RWPE1 (cell line): ENCODE measurements at regions of chr1 and their contacts with region 1.

Region 1: GRCh38 chr1:110780600-110781484 is 92.1 kb upstream of the CD53 start:
- DNase-seq: peak; percentile 62
- H3K27ac ChIP-seq: no peak overlapping the region
- CTCF ChIP-seq: peak; percentile 72

Region 2: GRCh38 chr1:110619412-110620249 is 161.2 kb before region 1 on chr1:
- CTCF ChIA-PET with region 1: interaction called, 24 read pairs
- POLR2A ChIA-PET with region 1: no interaction called
- DNase-seq: peak; percentile 78
- H3K27ac ChIP-seq: no peak overlapping the region
- CTCF ChIP-seq: peak; percentile 81

Region 3: DNA sequence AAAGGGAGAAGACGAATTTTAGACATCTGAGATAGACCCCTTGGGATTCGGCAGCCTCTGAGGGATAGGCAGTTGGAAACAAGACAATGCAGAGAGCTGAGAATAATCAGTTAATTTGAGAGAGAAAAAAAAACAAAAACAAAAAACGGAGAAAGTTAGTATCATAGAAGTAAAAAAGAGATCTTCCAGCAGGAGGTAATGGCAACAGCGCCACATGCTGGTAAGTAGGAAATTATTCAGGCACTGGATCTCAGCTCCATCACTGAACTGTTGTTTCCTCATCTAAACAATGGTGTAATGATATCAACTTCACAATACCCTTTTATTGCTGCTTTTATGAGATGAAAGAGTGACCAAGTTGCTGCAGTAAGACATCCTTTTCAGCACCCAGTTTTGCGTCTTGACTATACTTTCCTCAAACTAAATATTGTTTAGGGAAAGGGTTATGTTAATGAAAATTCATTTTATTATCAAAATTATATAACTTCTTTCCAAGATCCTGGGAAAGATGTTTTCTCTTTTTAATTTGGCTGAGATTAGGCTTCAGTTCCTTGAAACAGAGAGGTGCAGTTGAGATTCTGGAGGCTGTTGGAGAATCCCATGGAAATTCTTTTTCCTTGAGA is 14.7 kb before region 1 on chr1:
- CTCF ChIA-PET with region 1: interaction called, 18 read pairs
- POLR2A ChIA-PET with region 1: no interaction called
- DNase-seq: peak; percentile 56
- H3K27ac ChIP-seq: no peak overlapping the region
- CTCF ChIP-seq: peak; percentile 82

Region 4: GRCh38 chr1:110916669-110917306 is 135.9 kb after region 1 on chr1:
- CTCF ChIA-PET with region 1: no interaction called
- POLR2A ChIA-PET with region 1: no interaction called
- DNase-seq: peak; percentile 53
- H3K27ac ChIP-seq: no peak overlapping the region
- CTCF ChIP-seq: no peak